GM10248 (cell line): ENCODE measurements at regions of chr7 and their contacts with region 1.

Region 1: GRCh38 chr7:14717816-14718215 is 184.7 kb downstream of the DGKB start:
- DNase-seq: no peak
- CTCF ChIP-seq: peak; percentile 23

Region 2: GRCh38 chr7:14495633-14496032 is 222.2 kb before region 1 on chr7:
- CTCF ChIA-PET with region 1: no interaction called
- POLR2A ChIA-PET with region 1: no interaction called
- DNase-seq: no peak
- CTCF ChIP-seq: no peak

Region 3: GRCh38 chr7:14754631-14755030 is 36.8 kb after region 1 on chr7:
- CTCF ChIA-PET with region 1: no interaction called
- POLR2A ChIA-PET with region 1: no interaction called
- DNase-seq: no peak
- CTCF ChIP-seq: no peak

Region 4: DNA sequence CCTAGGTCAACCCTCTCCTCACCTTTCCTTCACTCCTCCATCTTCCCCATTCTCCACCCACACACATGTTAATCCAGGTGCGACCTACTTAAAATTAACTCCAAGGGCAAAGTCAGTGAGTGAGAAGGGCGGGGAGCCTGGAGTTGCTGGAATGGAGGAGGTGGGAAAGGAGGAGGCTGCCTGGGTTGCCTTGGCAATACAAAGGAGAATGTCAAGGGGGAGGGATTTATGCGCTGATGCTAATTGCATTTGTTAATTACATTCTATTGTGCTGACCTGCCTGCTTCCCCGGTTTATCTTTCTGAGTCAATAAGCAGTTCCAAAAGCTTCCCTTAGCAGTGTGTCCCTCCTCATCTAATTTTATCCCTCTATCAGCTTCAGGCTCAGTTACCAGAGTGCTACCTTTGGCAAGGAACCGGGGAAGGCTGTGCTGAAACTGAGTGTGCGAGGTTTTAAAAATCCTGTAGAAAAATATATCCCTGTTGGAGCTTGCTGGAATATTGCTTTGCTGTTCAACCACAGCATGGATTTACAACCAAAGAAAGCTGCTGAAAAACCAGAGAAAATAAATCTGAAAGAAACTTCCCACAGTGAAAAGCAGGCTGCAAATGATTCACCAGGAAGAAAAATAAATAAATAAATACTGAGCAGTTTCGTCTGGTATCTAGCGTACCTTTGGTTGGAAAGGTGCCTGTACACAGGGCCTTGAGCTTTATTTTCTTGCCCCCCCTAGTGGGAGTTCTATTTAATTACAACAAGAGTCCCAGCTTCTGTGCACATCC is 297.9 kb after region 1 on chr7:
- CTCF ChIA-PET with region 1: interaction called, 25 read pairs
- POLR2A ChIA-PET with region 1: no interaction called
- DNase-seq: peak; percentile 37
- CTCF ChIP-seq: peak; percentile 47